Endothelial cell of umbilical vein (primary cell): ENCODE measurements at regions of chr19 and their contacts with region 1.

Region 1: GRCh38 chr19:37906869-37907734 is at the start of gene SIPA1L3:
- DNase-seq: peak; percentile 97
- H3K4me3 ChIP-seq: peak within 1 kb of the TSS; percentile 40 to 99 (median 83)
- H3K27ac ChIP-seq: peak within 1 kb of the TSS; percentile 50
- H3K4me1 ChIP-seq: peaks cover 15% of the 10 kb centered on the region
- H3K27me3 ChIP-seq: no peaks in the 10 kb centered on the region
- CTCF ChIP-seq: no peak
- POLR2A ChIP-seq: peak; percentile 82
- total RNA-seq, gene SIPA1L3: 44.4 and 47.2 TPM in 2 replicates

Region 2: GRCh38 chr19:37370880-37371661 is 536.0 kb before region 1 on chr19 and contains the start of gene ZNF527:
- CTCF ChIA-PET with region 1: no interaction called
- POLR2A ChIA-PET with region 1: no interaction called
- dilution Hi-C with region 1: no loop called
- intact Hi-C with region 1: no loop called
- DNase-seq: peak; percentile 98
- H3K4me3 ChIP-seq: peak within 1 kb of the TSS; percentile 13 to 89 (median 72)
- H3K27ac ChIP-seq: peak within 1 kb of the TSS; percentile 14
- H3K4me1 ChIP-seq: no peaks in the 10 kb centered on the region
- H3K27me3 ChIP-seq: no peaks in the 10 kb centered on the region
- CTCF ChIP-seq: no peak
- POLR2A ChIP-seq: peak; percentile 74
- total RNA-seq, gene ZNF527: 3.4 and 3.6 TPM in 2 replicates

Region 3: DNA sequence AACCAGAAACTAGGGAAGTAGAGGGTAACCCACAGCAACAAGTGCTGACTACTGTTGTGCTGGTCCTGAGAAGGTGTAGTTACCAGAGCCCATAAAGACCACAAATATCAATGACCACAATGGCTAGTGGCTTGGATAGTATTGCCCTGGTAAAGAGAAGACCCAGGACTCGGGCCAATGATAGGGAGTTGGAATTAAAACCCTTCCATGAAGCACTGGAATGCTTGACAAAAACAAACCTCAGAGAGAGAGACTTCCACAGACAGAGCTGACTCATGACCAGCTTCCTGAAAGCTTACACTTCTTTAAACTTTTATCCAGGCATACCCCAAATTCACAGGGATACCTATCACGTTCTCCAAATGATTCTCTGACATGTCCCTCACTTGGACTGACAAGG is 61.2 kb before region 1 on chr19:
- CTCF ChIA-PET with region 1: no interaction called
- POLR2A ChIA-PET with region 1: no interaction called
- dilution Hi-C with region 1: no loop called
- intact Hi-C with region 1: no loop called
- DNase-seq: no peak
- H3K4me3 ChIP-seq: no peak overlapping the region
- H3K27ac ChIP-seq: no peak overlapping the region
- H3K4me1 ChIP-seq: no peaks in the 10 kb centered on the region
- H3K27me3 ChIP-seq: no peaks in the 10 kb centered on the region
- CTCF ChIP-seq: no peak
- POLR2A ChIP-seq: no peak

Region 4: DNA sequence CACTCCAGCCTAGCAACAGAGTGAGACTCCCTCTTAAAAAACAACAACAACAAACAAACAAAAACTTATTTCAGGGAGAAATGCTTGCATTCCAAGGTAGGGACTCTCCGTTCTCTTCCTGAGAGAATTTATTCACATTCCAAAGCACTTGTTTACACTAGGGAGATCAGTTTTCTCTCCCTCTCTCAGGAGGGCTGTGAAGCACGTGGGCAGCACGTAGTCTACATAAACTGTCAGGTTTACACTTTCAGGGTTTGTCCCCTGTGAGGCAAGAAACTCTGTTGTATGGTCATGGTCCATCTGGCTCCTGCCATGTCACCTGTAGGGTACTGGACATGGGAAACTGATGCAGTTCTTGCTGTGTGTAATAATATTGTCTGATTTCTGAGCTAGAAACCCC is 32.3 kb before region 1 on chr19:
- CTCF ChIA-PET with region 1: no interaction called
- POLR2A ChIA-PET with region 1: no interaction called
- dilution Hi-C with region 1: no loop called
- intact Hi-C with region 1: no loop called
- DNase-seq: no peak
- H3K4me3 ChIP-seq: no peak overlapping the region
- H3K27ac ChIP-seq: no peak overlapping the region
- H3K4me1 ChIP-seq: no peaks in the 10 kb centered on the region
- H3K27me3 ChIP-seq: no peaks in the 10 kb centered on the region
- CTCF ChIP-seq: no peak
- POLR2A ChIP-seq: no peak

Region 5: GRCh38 chr19:37938353-37938752 is 31.3 kb after region 1 on chr19:
- CTCF ChIA-PET with region 1: no interaction called
- POLR2A ChIA-PET with region 1: no interaction called
- dilution Hi-C with region 1: no loop called
- intact Hi-C with region 1: no loop called
- DNase-seq: no peak
- H3K4me3 ChIP-seq: no peak overlapping the region
- H3K27ac ChIP-seq: no peak overlapping the region
- H3K4me1 ChIP-seq: peaks cover 2% of the 10 kb centered on the region
- H3K27me3 ChIP-seq: no peaks in the 10 kb centered on the region
- CTCF ChIP-seq: no peak
- POLR2A ChIP-seq: no peak

Region 6: GRCh38 chr19:37999309-38000213 is 92.5 kb after region 1 on chr19:
- CTCF ChIA-PET with region 1: interaction called, 54 read pairs
- POLR2A ChIA-PET with region 1: interaction called, 25 read pairs
- dilution Hi-C with region 1: no loop called
- intact Hi-C with region 1: loop called (anchors 1 kb)
- DNase-seq: peak; percentile 89
- H3K4me3 ChIP-seq: no peak overlapping the region
- H3K27ac ChIP-seq: peak overlapping the region; percentile 93
- H3K4me1 ChIP-seq: peaks cover 52% of the 10 kb centered on the region
- H3K27me3 ChIP-seq: no peaks in the 10 kb centered on the region
- CTCF ChIP-seq: no peak
- POLR2A ChIP-seq: no peak

Region 7: GRCh38 chr19:38049105-38049649 is 142.1 kb after region 1 on chr19:
- CTCF ChIA-PET with region 1: interaction called, 145 read pairs
- POLR2A ChIA-PET with region 1: interaction called, 8 read pairs
- dilution Hi-C with region 1: no loop called
- intact Hi-C with region 1: loop called (anchors 1 kb)
- DNase-seq: no peak
- H3K4me3 ChIP-seq: no peak overlapping the region
- H3K27ac ChIP-seq: no peak overlapping the region
- H3K4me1 ChIP-seq: no peaks in the 10 kb centered on the region
- H3K27me3 ChIP-seq: no peaks in the 10 kb centered on the region
- CTCF ChIP-seq: no peak
- POLR2A ChIP-seq: no peak

Region 8: GRCh38 chr19:38095411-38096308 is 188.6 kb after region 1 on chr19:
- CTCF ChIA-PET with region 1: interaction called, 62 read pairs
- POLR2A ChIA-PET with region 1: no interaction called
- dilution Hi-C with region 1: no loop called
- intact Hi-C with region 1: loop called (anchors 1 kb)
- DNase-seq: peak; percentile 70
- H3K4me3 ChIP-seq: no peak overlapping the region
- H3K27ac ChIP-seq: no peak overlapping the region
- H3K4me1 ChIP-seq: no peaks in the 10 kb centered on the region
- H3K27me3 ChIP-seq: no peaks in the 10 kb centered on the region
- CTCF ChIP-seq: peak; percentile 71 to 76
- POLR2A ChIP-seq: no peak

Region 9: DNA sequence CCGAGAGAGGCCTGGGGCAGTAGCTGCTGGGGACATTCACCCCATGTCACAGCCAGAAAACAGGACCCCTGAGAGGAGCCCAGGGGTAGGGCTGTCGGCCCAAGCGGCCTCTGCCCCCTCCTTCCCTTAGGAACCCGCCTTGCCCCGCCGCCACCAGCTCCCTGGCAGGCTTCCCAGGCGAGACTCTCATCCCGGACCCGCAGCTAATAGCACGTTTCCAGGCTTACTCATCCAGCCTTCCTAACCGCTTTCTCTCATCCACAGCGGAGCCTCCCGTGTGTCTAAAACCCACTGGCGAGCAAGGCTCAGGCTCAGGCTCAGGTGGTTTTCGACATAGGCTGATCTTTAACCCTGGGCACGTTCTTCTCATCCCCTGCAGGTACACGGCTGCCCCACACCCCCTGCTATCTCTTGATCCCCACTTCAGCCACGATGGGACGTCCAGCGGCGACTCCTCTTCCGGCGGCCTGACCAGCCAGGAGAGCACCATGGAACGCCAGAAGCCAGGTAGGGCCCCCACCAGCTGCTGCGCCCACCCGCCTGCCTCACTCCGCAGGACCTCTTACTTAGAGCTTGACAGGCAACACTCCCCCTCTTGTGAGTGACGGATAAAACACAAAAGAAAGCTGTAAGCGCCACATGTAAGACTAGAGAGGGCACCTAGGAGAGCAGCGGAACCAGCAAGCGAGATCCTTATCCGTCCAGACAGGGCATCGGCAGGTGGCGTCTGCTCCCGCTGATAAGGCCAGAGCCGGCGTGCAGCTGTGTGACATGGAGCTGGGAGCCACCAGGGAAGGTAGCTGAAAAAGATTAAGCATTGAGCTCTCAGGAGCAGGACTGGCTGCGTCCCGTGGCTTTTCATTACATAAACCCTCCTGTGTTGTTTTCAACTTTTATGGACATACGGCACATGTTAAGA is 245.6 kb after region 1 on chr19:
- CTCF ChIA-PET with region 1: interaction called, 14 read pairs
- POLR2A ChIA-PET with region 1: no interaction called
- dilution Hi-C with region 1: no loop called
- intact Hi-C with region 1: no loop called
- DNase-seq: no peak
- H3K4me3 ChIP-seq: no peak overlapping the region
- H3K27ac ChIP-seq: no peak overlapping the region
- H3K4me1 ChIP-seq: no peaks in the 10 kb centered on the region
- H3K27me3 ChIP-seq: no peaks in the 10 kb centered on the region
- CTCF ChIP-seq: no peak
- POLR2A ChIP-seq: no peak

Region 10: DNA sequence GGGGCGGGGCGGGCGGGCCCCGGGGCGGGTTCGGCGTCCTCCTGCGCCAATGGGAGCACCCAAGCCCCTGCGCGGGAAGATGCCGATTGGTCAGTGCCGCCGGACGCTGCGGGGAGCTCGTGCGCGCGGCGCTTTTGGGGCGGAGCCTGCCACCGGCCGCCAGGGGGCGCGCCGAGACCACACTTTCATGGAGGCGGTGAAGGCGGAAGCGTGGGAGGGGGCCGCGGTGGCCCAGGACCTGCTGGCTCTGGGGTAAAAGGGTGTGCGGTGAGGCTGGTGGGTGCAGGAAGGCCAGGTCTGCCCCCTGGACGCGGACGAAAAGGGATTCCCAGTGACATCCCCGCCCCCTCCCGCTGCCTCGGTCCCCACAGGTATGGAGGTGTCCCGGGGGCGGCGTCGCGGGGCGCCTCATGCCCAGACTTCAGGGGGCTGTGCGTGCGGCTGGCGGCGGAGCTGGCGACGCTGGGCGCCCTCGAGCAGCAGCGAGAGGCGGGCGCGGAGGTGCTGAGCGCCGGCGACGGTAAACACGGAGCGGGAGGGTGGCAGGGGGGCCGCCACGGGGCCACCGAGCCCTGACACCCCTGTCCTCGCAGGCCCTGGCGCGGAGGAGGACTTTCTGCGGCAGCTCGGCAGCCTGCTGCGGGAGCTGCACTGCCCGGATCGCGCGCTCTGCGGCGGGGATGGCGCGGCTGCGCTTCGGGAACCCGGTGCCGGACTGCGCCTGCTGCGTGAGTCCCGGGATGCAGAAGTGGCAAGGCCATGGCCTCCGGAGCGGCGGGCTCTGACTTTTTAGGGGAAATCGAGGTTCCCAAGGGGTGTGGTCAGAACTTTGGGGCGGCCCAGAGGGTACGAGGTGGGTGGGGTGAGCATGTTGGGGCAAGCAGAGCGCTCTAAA is 496.1 kb after region 1 on chr19 and contains the start of gene FAM98C:
- CTCF ChIA-PET with region 1: interaction called, 12 read pairs
- POLR2A ChIA-PET with region 1: no interaction called
- dilution Hi-C with region 1: no loop called
- intact Hi-C with region 1: no loop called
- DNase-seq: peak; percentile 97
- H3K4me3 ChIP-seq: peak within 1 kb of the TSS; percentile 65 to 79 (median 73)
- H3K27ac ChIP-seq: peak within 1 kb of the TSS; percentile 28
- H3K4me1 ChIP-seq: peaks cover 2% of the 10 kb centered on the region
- H3K27me3 ChIP-seq: no peaks in the 10 kb centered on the region
- CTCF ChIP-seq: peak; percentile 89 to 95
- POLR2A ChIP-seq: peak; percentile 36
- total RNA-seq, gene FAM98C: 13.0 and 15.4 TPM in 2 replicates